GM10248 (cell line): ENCODE measurements at regions of chr11 and their contacts with region 1.

Region 1: GRCh38 chr11:1050581-1051355 is 14.2 kb upstream of the MUC6 start:
- DNase-seq: peak; percentile 93
- CTCF ChIP-seq: peak; percentile 95

Region 2: GRCh38 chr11:848380-848931 is 202.3 kb before region 1 on chr11:
- CTCF ChIA-PET with region 1: interaction called, 48 read pairs
- POLR2A ChIA-PET with region 1: no interaction called
- DNase-seq: peak; percentile 86
- CTCF ChIP-seq: peak; percentile 95

Region 3: DNA sequence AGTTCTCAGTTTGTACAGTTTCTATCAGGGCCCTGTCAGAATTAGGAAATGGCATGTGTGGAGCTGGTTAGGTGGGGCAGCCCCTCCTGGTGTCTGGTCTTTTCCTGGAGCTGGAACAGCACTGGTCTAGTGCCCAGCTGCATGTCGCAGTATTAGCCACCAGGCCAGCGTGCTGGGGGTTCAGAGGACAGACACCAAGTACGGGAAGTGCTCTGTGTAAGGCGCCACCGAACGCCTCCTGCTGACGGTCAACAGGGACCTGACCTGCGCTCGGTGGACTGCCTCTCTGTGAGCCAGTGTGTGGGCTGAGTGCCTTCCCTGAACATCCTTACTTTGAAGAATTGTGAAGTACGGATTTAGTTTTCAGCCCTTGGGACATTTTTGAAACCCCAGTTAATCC is 91.2 kb before region 1 on chr11:
- CTCF ChIA-PET with region 1: no interaction called
- POLR2A ChIA-PET with region 1: no interaction called
- DNase-seq: no peak
- CTCF ChIP-seq: no peak

Region 4: GRCh38 chr11:1036303-1036923 is 14.4 kb before region 1 on chr11 and contains the start of gene MUC6:
- CTCF ChIA-PET with region 1: no interaction called
- POLR2A ChIA-PET with region 1: no interaction called
- DNase-seq: no peak
- CTCF ChIP-seq: no peak

Region 5: DNA sequence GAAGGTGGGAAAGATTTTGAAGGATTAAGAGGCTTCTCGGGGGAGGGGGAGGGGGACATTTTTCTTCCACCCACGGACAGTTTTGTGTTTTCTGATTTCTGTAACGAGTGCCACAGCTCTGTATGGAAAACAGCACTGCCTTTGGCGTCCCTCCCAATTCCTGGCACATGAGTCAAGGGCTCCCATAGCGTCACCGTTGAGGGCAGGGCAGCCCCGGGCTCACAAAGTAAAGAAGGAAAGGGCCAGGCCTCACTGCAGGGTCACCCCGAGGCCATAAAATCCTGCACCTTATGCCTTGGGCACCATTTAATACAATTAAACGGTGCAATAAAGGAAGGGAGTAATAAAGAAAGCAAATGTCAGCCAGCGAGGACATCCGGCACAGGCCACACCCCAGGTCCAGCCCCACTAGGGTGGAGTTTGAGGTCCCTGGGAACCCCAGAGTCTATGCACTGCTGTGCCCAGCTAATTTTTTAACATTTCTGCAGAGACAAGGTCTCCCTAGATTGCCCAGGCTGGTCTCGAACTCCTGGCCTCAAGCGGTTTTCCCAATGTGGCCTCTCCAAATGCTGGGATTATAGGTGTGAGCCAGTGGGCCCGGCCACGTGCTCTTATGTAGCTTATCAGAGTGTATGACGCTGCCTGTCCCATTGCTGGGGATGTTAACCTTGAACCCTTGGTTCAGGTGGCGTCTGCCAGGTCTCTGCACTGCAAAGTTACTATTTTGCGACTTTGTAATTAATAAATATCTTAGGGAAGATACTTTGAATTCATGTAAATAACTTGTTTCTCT is 10.3 kb after region 1 on chr11:
- CTCF ChIA-PET with region 1: interaction called, 10 read pairs
- POLR2A ChIA-PET with region 1: no interaction called
- DNase-seq: no peak
- CTCF ChIP-seq: no peak